ENCODE measurements at regions of chr5 and their contacts with region 1.

Region 1: GRCh38 chr5:170747851-170748250 is 35.7 kb upstream of the GABRP start:
- DNase-seq: no peak
- ATAC-seq: no peak
- H3K4me3 Mint-ChIP-seq: no peak overlapping the region
- H3K27ac Mint-ChIP-seq: no peak overlapping the region
- H3K4me1 Mint-ChIP-seq: peaks cover 3% of the 10 kb centered on the region
- H3K27me3 Mint-ChIP-seq: peaks cover 35% of the 10 kb centered on the region
- CTCF ChIP-seq: no peak

Region 2: GRCh38 chr5:170732685-170733084 is 15.2 kb before region 1 on chr5:
- CTCF ChIA-PET with region 1: interaction called, 12 read pairs
- POLR2A ChIA-PET with region 1: no interaction called
- intact Hi-C with region 1: no loop called
- DNase-seq: no peak
- ATAC-seq: no peak
- H3K4me3 Mint-ChIP-seq: no peak overlapping the region
- H3K27ac Mint-ChIP-seq: no peak overlapping the region
- H3K4me1 Mint-ChIP-seq: no peaks in the 10 kb centered on the region
- H3K27me3 Mint-ChIP-seq: peaks cover 4% of the 10 kb centered on the region
- CTCF ChIP-seq: no peak

Region 3: DNA sequence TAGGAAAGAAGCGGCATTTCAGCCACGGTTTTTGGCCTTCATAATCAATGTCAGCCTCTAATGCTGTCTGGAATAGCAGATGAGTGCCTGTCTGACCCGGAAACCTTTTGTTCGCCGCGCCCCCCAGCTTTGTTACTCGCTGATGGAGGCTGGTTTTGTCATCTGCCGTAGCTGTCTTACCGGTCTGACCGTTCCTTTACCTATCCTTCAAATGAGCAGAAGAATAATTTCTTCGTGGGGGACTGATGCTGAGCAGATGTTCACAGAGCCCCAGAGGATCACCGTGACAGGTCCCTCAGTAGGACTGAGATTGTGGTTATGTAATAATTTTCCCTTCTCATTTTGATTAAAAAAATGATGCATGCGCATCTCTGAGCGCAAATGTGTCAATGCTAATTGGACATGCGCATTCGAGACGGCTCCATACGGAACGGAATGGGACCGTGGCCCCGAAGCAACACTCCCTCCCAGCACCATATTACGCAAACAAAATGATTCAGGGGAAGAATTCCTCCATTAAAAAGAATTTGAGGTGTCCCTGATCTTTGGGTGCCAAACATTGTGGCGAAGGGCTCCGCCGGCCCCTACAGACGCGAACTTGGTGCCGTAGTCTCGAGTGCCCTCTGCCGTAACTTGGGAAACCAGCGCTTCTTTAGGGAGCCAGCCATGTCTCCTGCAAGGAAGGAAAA is 588.8 kb after region 1 on chr5:
- CTCF ChIA-PET with region 1: interaction called, 5 read pairs
- POLR2A ChIA-PET with region 1: no interaction called
- intact Hi-C with region 1: loop called (anchors 10 kb)
- DNase-seq: peak; percentile 51
- ATAC-seq: peak; percentile 65
- H3K4me3 Mint-ChIP-seq: peak overlapping the region; percentile 55
- H3K27ac Mint-ChIP-seq: no peak overlapping the region
- H3K4me1 Mint-ChIP-seq: peaks cover 10% of the 10 kb centered on the region
- H3K27me3 Mint-ChIP-seq: peaks cover 32% of the 10 kb centered on the region
- CTCF ChIP-seq: peak; percentile 36

Measured in activated CD8-positive, alpha-beta T cell treated with anti-CD3 and anti-CD28 coated beads for 36 hours (primary cell).